Activated T-helper 1 cell treated with anti-CD3 and anti-CD28 coated beads, Interleukin-12 subunit alpha, Interleukin-12 subunit beta, Interleukin-2, Interleukin-4 antibody, amounts not matched to agents 30 ng/mL and 10 ng/mL and 1 ng/mL, durations not matched to agents 14 hours and 24 hours and 36 hours (primary cell): ENCODE measurements at regions of chr9 and their contacts with region 1.

Region 1: DNA sequence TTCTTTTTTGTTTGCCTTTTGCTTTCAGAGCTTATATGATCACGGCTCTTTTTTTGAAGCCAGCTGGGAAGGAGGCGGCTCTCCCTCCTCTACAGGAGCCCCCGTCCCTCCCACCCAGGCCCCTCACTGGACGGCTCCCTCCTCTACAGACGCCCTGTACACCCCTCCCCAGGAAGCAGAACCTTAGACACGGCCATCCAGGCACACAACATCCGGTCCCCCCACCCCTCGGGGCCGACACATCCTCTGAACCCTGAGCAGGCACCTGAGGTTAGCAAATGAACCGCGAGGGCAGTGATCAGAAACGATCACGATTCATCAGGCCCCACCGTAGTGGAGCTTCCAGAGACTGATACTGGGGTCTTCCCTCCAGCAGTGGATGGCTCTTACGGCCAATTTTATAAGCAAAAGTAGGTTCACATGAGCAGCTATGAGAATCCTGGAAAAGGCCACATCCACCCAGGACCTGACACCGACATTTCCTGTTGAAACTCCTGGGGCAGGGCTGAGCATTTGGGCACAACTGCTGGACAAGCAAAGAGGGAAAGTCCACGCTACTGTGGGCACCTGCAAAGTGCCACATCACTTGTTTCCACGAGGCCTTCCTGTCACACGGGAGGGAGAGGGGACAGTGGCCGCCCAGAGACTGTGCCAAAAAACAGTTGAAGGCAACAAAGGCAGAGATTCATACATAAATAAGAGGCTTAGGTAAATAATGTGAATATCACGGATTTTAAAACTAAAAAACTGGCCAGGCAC is 78.9 kb downstream of the SEMA4D start:
- DNase-seq: peak; percentile 65
- H3K4me3 Mint-ChIP-seq: peak overlapping the region; percentile 92
- H3K27ac Mint-ChIP-seq: peak overlapping the region; percentile 100
- H3K4me1 Mint-ChIP-seq: peaks cover 99% of the 10 kb centered on the region
- H3K27me3 Mint-ChIP-seq: no peaks in the 10 kb centered on the region

Region 2: DNA sequence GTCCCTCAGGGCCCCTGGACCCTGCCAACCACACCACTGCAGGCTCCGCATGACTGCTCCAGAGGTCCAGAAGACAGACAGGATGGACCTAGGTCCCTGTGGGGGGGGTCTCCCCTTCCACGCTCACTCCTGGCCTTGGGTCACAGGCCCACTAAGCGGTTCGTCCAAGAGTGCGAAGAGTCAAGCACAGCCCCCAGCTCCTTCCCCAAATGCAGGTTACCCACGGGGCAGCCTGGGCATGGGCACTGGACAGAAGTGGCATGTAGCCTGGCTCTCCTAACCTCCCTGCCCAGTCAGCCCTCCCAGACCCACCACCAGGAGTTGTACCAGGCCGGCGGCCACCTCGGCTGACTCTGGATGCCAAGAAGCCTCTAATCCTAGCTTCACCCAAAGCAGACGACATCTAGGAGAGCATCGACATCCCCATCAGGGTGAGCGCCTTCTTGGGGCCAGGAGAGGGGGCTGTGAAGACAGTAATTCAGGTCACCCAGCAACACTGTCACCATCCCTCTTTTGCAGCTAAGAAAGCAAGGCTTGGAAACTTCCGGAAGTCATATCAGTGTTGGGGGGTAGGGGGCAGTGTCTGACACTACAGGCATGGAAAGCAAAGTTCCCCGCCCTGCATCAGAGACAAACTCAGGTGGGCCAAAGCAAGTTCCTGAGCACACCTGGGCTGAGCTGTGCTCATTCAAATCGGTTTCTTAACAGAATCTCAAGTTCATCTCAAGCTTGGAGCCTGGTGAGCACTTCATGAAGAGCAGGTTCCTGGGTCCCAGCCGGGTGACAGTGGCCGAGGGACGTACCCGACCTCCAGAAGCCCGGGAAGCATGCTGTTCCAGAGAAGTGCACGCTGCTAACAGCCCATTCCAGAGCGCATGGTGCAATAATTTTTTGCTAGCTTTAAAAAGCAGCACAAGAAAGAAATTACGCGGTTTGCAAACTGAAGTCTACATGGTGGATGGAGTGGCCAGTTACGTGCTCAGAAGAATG is 10.1 kb after region 1 on chr9:
- intact Hi-C with region 1: loop called (anchors 1 kb)
- DNase-seq: no peak
- H3K4me3 Mint-ChIP-seq: no peak overlapping the region
- H3K27ac Mint-ChIP-seq: peak overlapping the region; percentile 100
- H3K4me1 Mint-ChIP-seq: peaks cover 91% of the 10 kb centered on the region
- H3K27me3 Mint-ChIP-seq: no peaks in the 10 kb centered on the region

Region 3: DNA sequence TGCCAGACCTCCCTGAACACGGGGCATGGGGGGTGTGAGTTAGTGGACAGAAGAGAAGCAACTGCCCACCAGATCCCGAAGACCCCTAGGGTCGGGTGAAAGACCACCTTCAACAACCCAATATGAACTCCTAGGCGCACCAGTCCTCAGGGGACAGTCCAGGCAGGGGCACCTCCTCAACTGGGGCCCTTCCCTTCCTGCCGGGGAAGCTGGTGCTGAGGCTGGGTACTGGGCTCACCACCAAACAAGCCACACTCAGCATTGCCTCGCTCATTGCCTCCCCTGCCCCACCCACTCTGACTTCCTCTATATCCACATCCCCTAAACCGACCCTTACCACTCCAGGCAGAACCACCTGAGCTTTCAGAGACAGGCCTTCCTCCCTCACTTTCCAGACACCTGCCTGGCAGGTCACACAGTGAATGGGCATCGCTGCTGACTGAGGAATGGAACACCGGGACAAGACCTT is 36.3 kb after region 1 on chr9:
- intact Hi-C with region 1: no loop called
- DNase-seq: peak; percentile 34
- H3K4me3 Mint-ChIP-seq: peak overlapping the region; percentile 67
- H3K27ac Mint-ChIP-seq: peak overlapping the region; percentile 86
- H3K4me1 Mint-ChIP-seq: peaks cover 84% of the 10 kb centered on the region
- H3K27me3 Mint-ChIP-seq: no peaks in the 10 kb centered on the region

Region 4: DNA sequence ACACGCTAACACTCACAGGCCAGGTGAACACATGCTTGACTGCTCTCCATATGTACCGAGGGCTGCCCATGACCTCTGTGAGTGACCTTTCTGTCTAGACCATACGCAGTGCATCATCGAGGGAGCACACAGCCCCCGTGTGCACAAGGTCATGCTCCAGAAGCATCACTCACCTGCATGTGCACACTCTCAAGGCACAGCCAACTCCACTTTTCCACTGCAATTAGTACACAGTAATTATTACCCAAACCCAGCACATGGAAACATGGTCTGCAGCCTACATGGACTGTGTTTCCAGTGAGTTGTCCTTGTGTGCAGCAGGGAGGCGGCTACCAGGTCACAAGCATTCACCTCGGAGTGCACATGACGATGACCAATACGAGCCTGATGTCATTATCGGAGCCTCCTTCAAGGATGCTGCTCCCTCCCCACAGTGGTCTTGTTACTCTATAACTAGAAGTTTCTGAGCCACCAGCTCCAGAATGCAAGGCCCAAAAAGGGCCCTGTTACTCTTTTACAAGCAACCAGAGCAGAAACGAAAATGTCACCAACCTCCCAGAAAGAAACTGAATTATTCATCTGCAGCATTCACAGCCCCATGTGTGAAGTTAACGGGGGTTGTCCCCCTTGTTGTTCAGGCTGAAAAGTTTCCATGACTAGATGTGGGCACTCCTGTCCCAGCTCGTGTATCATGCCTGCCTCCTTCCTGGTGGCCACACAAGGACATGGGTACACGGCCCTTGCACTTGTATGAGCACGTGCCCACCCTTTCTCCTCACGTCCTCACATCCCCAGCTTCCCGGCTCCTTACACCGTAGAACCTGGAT is 47.6 kb after region 1 on chr9:
- intact Hi-C with region 1: loop called (anchors 1 kb)
- DNase-seq: peak; percentile 44
- H3K4me3 Mint-ChIP-seq: peak overlapping the region; percentile 73
- H3K27ac Mint-ChIP-seq: peak overlapping the region; percentile 98
- H3K4me1 Mint-ChIP-seq: peaks cover 93% of the 10 kb centered on the region
- H3K27me3 Mint-ChIP-seq: no peaks in the 10 kb centered on the region

Region 5: DNA sequence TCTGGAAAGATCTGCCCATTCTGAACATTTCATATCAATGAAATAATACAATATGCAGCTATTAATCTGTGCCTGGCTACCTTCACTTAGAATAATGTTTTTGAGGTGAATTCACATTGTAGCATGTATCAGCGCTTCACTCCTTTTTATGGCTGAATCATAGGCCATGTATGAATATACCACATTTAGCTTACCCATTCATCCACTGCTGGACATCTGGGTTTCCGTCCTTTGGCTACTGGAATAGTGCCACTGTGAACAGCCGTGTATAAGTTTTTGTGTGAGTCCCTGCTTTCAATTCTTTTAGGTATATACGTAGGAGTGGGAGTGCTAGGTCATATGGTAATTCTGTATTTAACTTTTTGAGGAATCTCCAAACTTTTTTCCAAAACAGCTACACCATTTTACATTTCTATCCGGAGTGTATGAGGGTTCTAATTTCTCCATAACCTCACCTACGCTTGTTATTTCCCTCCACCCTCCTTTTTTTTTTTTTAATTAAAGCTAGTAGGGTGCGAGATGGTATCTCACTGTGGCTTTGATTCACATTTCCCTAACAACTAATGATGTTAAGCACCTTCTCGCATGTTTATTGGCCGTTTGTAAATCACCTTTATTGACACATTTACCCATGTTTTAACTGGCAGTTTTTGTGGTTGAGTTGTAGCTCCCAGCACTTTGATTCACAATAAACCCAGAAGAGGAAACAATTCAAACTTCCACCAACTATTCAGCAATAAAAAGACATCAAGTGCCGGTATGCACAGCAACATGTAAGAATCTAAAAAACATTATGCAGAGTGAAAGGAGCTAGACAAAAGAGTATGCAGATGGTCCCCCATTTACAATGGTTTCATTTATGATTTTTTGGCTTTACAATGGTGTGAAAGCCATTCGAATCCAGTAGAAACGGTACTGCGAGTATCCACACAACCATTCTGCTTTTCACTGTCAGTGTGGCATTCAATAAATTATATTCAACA is 70.8 kb after region 1 on chr9:
- intact Hi-C with region 1: loop called (anchors 2 kb)
- DNase-seq: no peak
- H3K4me3 Mint-ChIP-seq: peak overlapping the region; percentile 75
- H3K27ac Mint-ChIP-seq: peak overlapping the region; percentile 85
- H3K4me1 Mint-ChIP-seq: peaks cover 96% of the 10 kb centered on the region
- H3K27me3 Mint-ChIP-seq: no peaks in the 10 kb centered on the region

Region 6: GRCh38 chr9:89522261-89522958 is 103.3 kb after region 1 on chr9:
- intact Hi-C with region 1: loop called (anchors 1 kb)
- DNase-seq: peak; percentile 77
- H3K4me3 Mint-ChIP-seq: peak overlapping the region; percentile 81
- H3K27ac Mint-ChIP-seq: peak overlapping the region; percentile 99
- H3K4me1 Mint-ChIP-seq: peaks cover 91% of the 10 kb centered on the region
- H3K27me3 Mint-ChIP-seq: no peaks in the 10 kb centered on the region

Region 7: GRCh38 chr9:89984214-89984613 is 565.2 kb after region 1 on chr9:
- intact Hi-C with region 1: loop called (anchors 5 kb)
- DNase-seq: no peak
- H3K4me3 Mint-ChIP-seq: peak overlapping the region; percentile 61
- H3K27ac Mint-ChIP-seq: peak overlapping the region; percentile 93
- H3K4me1 Mint-ChIP-seq: peaks cover 67% of the 10 kb centered on the region
- H3K27me3 Mint-ChIP-seq: peaks cover 2% of the 10 kb centered on the region